ENCODE measurements at regions of chr3 and their contacts with region 1.

Region 1: GRCh38 chr3:187164885-187165543 is 25.7 kb upstream of the RPL39L start:
- DNase-seq: peak; percentile 41
- H3K4me3 ChIP-seq: peak overlapping the region in 1 of 2 experiments; percentile 14; a peak in 1 of 4 replicates
- H3K27ac ChIP-seq: no peak overlapping the region
- H3K4me1 ChIP-seq: no peaks in the 10 kb centered on the region
- H3K27me3 ChIP-seq: no peaks in the 10 kb centered on the region; the same call in 1 of the 2 replicates
- CTCF ChIP-seq: peak; percentile 83
- EP300 ChIP-seq: no peak
- RAD21 ChIP-seq: peak; percentile 69

Region 2: DNA sequence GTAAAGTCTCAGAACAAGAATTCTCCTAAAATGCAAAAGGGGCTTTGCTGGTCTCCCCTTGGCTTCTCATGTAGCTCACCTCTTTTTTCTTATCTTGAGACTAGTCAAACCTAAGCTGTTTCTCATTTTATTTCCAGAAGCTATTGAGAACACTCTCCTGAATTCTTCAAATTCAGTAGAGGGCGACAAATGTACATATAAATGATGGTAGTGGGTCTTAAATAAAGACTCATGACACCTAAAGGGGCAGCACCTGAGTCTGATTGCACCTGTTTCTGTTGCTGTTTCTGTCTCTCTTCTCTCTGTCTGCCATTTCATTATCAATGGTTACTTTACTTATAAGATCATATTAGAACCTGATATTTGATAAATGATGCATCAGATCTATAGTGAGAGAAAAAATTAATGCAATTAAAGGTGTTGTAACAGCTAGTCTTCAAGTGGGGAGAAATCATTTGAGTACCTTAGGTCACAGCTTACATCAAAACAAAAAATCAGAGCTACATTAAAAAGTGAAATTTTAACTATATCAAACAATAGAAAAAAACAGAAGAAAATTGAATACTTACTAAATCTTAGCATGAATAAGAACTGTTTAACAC is 315.5 kb before region 1 on chr3:
- CTCF ChIA-PET with region 1: interaction called, 101 read pairs
- POLR2A ChIA-PET with region 1: no interaction called
- DNase-seq: peak; percentile 60
- H3K4me3 ChIP-seq: no peak overlapping the region; a peak in 1 of 4 replicates
- H3K27ac ChIP-seq: no peak overlapping the region
- H3K4me1 ChIP-seq: no peaks in the 10 kb centered on the region
- H3K27me3 ChIP-seq: peaks cover 17% of the 10 kb centered on the region; the same call in 1 of the 2 replicates
- CTCF ChIP-seq: peak; percentile 66
- EP300 ChIP-seq: no peak
- RAD21 ChIP-seq: peak; percentile 80

Region 3: GRCh38 chr3:187107989-187108388 is 57.0 kb before region 1 on chr3:
- CTCF ChIA-PET with region 1: interaction called, 60 read pairs
- POLR2A ChIA-PET with region 1: no interaction called
- DNase-seq: no peak
- H3K4me3 ChIP-seq: no peak overlapping the region
- H3K27ac ChIP-seq: no peak overlapping the region
- H3K4me1 ChIP-seq: no peaks in the 10 kb centered on the region
- H3K27me3 ChIP-seq: no peaks in the 10 kb centered on the region
- CTCF ChIP-seq: no peak
- EP300 ChIP-seq: no peak
- RAD21 ChIP-seq: no peak

Region 4: DNA sequence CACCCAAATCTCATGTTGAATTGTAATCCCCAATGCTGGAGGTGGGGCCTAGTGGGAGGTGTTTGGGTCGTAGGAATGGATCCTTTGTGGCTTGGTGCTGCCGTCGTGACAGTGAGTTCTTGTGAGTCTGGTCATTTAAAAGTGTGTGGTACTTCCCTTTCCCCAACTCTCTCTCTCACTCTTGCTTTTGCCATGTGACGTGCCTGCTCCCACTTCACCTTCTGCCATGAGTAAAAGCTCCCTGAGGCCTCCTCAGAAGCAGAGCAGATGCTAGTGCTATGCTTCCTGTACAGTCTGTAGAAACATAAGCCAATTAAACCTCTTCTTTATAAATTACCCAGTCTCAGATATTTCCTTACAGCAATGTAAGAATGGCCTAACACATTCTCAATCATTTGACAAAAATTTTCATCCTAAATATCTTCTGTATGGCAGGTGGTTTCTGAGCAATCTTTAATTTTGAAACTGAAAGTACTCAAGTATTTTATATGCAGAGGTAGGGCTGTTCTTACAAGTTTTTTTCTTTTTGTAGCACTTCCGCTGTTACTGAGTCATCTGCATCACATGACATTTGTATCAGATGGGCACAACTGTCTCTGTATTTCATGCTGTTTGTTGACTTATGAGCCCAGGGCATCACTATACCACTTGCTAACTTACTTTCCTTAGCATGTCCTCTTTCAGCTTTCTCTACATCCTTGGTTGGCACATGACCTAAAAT is 34.5 kb before region 1 on chr3:
- CTCF ChIA-PET with region 1: interaction called, 10 read pairs
- POLR2A ChIA-PET with region 1: no interaction called
- DNase-seq: no peak
- H3K4me3 ChIP-seq: no peak overlapping the region
- H3K27ac ChIP-seq: peak overlapping the region in 1 of 2 experiments; percentile 34; a peak in 1 of 4 replicates
- H3K4me1 ChIP-seq: no peaks in the 10 kb centered on the region
- H3K27me3 ChIP-seq: no peaks in the 10 kb centered on the region
- CTCF ChIP-seq: no peak
- EP300 ChIP-seq: no peak
- RAD21 ChIP-seq: no peak

Region 5: GRCh38 chr3:187150599-187150998 is 14.4 kb before region 1 on chr3:
- CTCF ChIA-PET with region 1: interaction called, 12 read pairs
- POLR2A ChIA-PET with region 1: no interaction called
- DNase-seq: no peak
- H3K4me3 ChIP-seq: no peak overlapping the region
- H3K27ac ChIP-seq: no peak overlapping the region
- H3K4me1 ChIP-seq: no peaks in the 10 kb centered on the region
- H3K27me3 ChIP-seq: peaks cover 5% of the 10 kb centered on the region; the same call in 1 of the 2 replicates
- CTCF ChIP-seq: peak; percentile 36; the same call in 1 of the 2 replicates
- EP300 ChIP-seq: no peak
- RAD21 ChIP-seq: peak; percentile 22

Region 6: GRCh38 chr3:187401861-187402260 is 236.8 kb after region 1 on chr3:
- CTCF ChIA-PET with region 1: no interaction called
- POLR2A ChIA-PET with region 1: no interaction called
- DNase-seq: no peak
- H3K4me3 ChIP-seq: no peak overlapping the region
- H3K27ac ChIP-seq: no peak overlapping the region
- H3K4me1 ChIP-seq: no peaks in the 10 kb centered on the region
- H3K27me3 ChIP-seq: no peaks in the 10 kb centered on the region; the same call in 1 of the 2 replicates
- CTCF ChIP-seq: no peak
- EP300 ChIP-seq: no peak
- RAD21 ChIP-seq: no peak

Measured in SK-N-SH (cell line).